GM12878 (cell line): ENCODE measurements at regions of chr2 and their contacts with region 1.

Region 1: GRCh38 chr2:118088051-118089024 is at the start of gene INSIG2:
- DNase-seq: peak; percentile 98
- ATAC-seq: peak; percentile 95
- H3K4me3 ChIP-seq: peak within 1 kb of the TSS; percentile 70
- H3K27ac ChIP-seq: peak within 1 kb of the TSS; percentile 69
- H3K4me1 ChIP-seq: no peaks in the 10 kb centered on the region
- H3K27me3 ChIP-seq: 0 out of 4 replicates have a peak, but pooled peaks cover 0 to 3% of the 10 kb centered on the region in 2 experiments
- CTCF ChIP-seq: peak in 1 of 3 experiments; percentile 21; a peak in 1 of 6 replicates
- EP300 ChIP-seq: 0 out of 4 replicates have a peak, but pooled peaks of 1 of the 2 experiments have one; percentile 17
- POLR2A ChIP-seq: peak; percentile 74
- RAD21 ChIP-seq: no peak
- polyA plus RNA-seq, gene INSIG2: 14.2 to 15.6 TPM

Region 2: GRCh38 chr2:117692001-117692763 is 396.2 kb before region 1 on chr2:
- CTCF ChIA-PET with region 1: no interaction called
- POLR2A ChIA-PET with region 1: no interaction called
- RAD21 ChIA-PET with region 1: no interaction called
- SMC1A ChIA-PET with region 1: no interaction called
- in situ Hi-C with region 1: no loop called
- intact Hi-C with region 1: no loop called
- DNase-seq: no peak
- ATAC-seq: no peak
- H3K4me3 ChIP-seq: no peak overlapping the region
- H3K27ac ChIP-seq: no peak overlapping the region
- H3K4me1 ChIP-seq: no peaks in the 10 kb centered on the region
- H3K27me3 ChIP-seq: no peaks in the 10 kb centered on the region
- CTCF ChIP-seq: no peak
- EP300 ChIP-seq: no peak
- POLR2A ChIP-seq: no peak
- RAD21 ChIP-seq: no peak

Region 3: GRCh38 chr2:117979911-117980701 is 108.2 kb before region 1 on chr2:
- CTCF ChIA-PET with region 1: no interaction called
- POLR2A ChIA-PET with region 1: no interaction called
- RAD21 ChIA-PET with region 1: no interaction called
- SMC1A ChIA-PET with region 1: no interaction called
- in situ Hi-C with region 1: no loop called
- intact Hi-C with region 1: no loop called
- DNase-seq: no peak
- ATAC-seq: no peak
- H3K4me3 ChIP-seq: no peak overlapping the region
- H3K27ac ChIP-seq: no peak overlapping the region
- H3K4me1 ChIP-seq: no peaks in the 10 kb centered on the region
- H3K27me3 ChIP-seq: no peaks in the 10 kb centered on the region
- CTCF ChIP-seq: no peak
- EP300 ChIP-seq: no peak
- POLR2A ChIP-seq: no peak
- RAD21 ChIP-seq: no peak

Region 4: DNA sequence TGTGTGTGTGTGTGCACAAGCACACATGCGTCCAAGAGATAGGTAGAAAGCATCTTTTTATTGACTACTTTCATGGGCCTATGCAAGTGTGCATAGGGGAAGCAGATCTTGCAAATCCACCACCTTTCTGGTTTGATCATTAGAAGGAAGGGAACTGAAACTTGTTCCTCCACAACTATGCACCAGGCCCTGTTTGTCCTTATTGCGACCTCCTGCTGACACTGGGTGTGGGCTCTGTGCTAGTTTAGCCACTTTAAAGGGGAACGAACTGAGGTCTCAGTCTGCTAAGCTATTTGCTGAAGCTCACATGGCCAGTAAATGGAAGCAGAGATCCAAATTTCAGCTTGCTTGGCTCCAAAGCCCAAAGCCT is 32.2 kb before region 1 on chr2:
- CTCF ChIA-PET with region 1: interaction called, 31 read pairs
- POLR2A ChIA-PET with region 1: interaction called, 6 read pairs
- RAD21 ChIA-PET with region 1: interaction called, 4 read pairs
- SMC1A ChIA-PET with region 1: interaction called, 48 read pairs
- in situ Hi-C with region 1: no loop called
- intact Hi-C with region 1: no loop called
- DNase-seq: peak; percentile 86
- ATAC-seq: peak; percentile 92
- H3K4me3 ChIP-seq: peak overlapping the region; percentile 56
- H3K27ac ChIP-seq: peak overlapping the region; percentile 73
- H3K4me1 ChIP-seq: peaks cover 39% of the 10 kb centered on the region
- H3K27me3 ChIP-seq: no peaks in the 10 kb centered on the region
- CTCF ChIP-seq: no peak
- EP300 ChIP-seq: peak; percentile 72 to 90
- POLR2A ChIP-seq: no peak
- RAD21 ChIP-seq: no peak

Region 5: DNA sequence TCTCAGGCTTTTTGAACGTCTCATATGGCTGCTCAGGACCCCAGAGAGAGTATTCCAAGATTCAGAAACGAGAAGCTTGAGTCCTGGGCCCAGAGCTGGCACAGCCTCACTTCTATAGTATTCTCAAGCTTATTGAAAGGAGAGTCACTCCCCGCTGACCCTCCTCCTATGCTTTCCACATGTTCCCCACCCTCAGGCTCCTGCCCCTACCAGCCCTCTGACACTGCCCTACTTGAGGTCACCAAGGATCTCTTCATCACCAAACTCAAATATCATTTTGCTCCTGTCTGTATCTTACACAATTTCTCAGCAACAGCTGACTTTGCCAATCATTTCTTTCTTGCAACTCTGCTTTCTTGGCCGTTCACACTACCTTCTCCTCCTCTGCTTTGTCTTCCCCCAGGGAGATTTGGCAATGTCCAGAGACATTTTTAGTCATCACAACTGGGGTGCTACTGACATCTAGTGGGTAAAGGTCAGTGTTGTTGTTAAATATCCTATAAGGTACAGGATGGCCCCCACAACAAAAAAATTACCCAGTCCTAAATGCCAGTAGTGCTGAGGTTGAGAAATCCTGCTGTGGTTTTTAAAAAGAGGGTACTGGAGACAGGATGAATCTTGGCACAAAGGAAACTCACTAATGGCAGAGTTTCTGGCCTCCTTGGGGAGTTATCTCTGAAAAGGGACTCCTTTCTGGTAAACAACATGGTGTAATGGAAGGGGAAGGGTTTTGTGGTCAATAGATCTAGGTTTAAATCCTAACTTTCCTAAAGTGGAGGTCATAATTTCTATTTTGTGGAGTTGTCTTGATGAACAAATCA is 27.0 kb before region 1 on chr2:
- CTCF ChIA-PET with region 1: interaction called, 31 read pairs
- POLR2A ChIA-PET with region 1: interaction called, 6 read pairs
- RAD21 ChIA-PET with region 1: interaction called, 4 read pairs
- SMC1A ChIA-PET with region 1: interaction called, 48 read pairs
- in situ Hi-C with region 1: no loop called
- intact Hi-C with region 1: no loop called
- DNase-seq: peak; percentile 57
- ATAC-seq: peak; percentile 87
- H3K4me3 ChIP-seq: no peak overlapping the region
- H3K27ac ChIP-seq: no peak overlapping the region
- H3K4me1 ChIP-seq: peaks cover 27% of the 10 kb centered on the region
- H3K27me3 ChIP-seq: no peaks in the 10 kb centered on the region
- CTCF ChIP-seq: peak; percentile 67 to 76 (median 68)
- EP300 ChIP-seq: no peak
- POLR2A ChIP-seq: no peak
- RAD21 ChIP-seq: peak; percentile 98

Region 6: GRCh38 chr2:118077636-118078247 is 10.6 kb before region 1 on chr2:
- CTCF ChIA-PET with region 1: interaction called, 4 read pairs
- POLR2A ChIA-PET with region 1: interaction called, 3 read pairs
- RAD21 ChIA-PET with region 1: interaction called, 3 read pairs
- SMC1A ChIA-PET with region 1: interaction called, 11 read pairs
- in situ Hi-C with region 1: no loop called
- intact Hi-C with region 1: no loop called
- DNase-seq: no peak
- ATAC-seq: no peak
- H3K4me3 ChIP-seq: no peak overlapping the region
- H3K27ac ChIP-seq: no peak overlapping the region
- H3K4me1 ChIP-seq: no peaks in the 10 kb centered on the region
- H3K27me3 ChIP-seq: peaks cover 0 to 15% of the 10 kb centered on the region in 2 experiments; a peak in 2 of 4 replicates
- CTCF ChIP-seq: no peak
- EP300 ChIP-seq: no peak
- POLR2A ChIP-seq: no peak
- RAD21 ChIP-seq: no peak

Region 7: DNA sequence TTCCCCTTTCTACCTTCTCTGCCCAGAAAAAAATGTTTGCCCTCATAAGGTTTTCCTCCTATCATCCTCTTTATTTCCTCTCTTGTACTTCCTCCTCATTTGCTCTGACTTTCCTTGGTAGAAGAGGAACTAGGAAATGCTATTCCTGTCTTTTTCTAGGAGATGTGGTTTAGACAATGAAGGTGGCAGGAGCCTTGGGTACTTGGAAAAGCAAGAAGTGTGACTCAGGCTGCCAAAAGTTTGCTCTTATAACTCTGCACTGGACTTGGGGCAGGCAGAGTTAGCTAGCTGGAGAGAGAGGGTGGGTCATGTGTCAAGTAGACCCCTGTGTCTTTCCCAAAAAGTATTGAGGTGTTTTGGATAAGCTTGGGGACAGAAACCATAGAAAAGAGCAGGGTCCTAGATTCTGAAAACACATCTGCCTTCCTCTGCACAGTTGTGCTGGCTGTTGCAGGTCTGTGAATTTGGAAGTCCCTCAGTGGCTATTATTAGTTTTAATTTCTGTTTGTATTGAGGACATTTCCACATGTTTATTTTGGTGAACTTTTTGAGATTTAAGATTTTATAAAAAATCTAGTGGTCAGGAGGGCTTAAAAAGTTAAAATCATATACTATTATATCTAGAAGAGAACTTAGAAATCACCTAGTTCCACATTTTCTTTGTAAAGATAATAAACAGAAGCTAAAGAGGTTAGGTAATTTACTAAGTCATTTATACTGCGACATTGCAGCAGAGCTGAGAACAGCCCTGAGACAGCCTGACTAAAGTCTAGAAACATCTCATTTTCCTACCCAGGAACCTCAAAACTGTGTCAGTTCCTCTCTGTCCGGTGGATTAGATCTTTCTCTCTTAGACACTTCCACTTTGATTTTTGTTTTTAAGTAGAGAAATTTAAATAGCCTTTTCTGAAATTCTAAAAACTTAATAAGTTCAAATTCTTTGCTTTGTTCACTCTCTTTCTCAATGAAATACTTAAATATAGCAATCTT is 15.9 kb after region 1 on chr2:
- CTCF ChIA-PET with region 1: interaction called, 10 read pairs
- POLR2A ChIA-PET with region 1: interaction called, 24 read pairs
- RAD21 ChIA-PET with region 1: interaction called, 10 read pairs
- SMC1A ChIA-PET with region 1: interaction called, 19 read pairs
- in situ Hi-C with region 1: no loop called
- intact Hi-C with region 1: loop called (anchors 2 kb)
- DNase-seq: peak; percentile 53
- ATAC-seq: peak; percentile 99
- H3K4me3 ChIP-seq: peak overlapping the region; percentile 45; the same call in 1 of the 2 replicates
- H3K27ac ChIP-seq: peak overlapping the region; percentile 52
- H3K4me1 ChIP-seq: peaks cover 20% of the 10 kb centered on the region
- H3K27me3 ChIP-seq: no peaks in the 10 kb centered on the region
- CTCF ChIP-seq: no peak
- EP300 ChIP-seq: peak in 1 of 2 experiments; percentile 85; a peak in 2 of 4 replicates
- POLR2A ChIP-seq: no peak
- RAD21 ChIP-seq: no peak

Region 8: DNA sequence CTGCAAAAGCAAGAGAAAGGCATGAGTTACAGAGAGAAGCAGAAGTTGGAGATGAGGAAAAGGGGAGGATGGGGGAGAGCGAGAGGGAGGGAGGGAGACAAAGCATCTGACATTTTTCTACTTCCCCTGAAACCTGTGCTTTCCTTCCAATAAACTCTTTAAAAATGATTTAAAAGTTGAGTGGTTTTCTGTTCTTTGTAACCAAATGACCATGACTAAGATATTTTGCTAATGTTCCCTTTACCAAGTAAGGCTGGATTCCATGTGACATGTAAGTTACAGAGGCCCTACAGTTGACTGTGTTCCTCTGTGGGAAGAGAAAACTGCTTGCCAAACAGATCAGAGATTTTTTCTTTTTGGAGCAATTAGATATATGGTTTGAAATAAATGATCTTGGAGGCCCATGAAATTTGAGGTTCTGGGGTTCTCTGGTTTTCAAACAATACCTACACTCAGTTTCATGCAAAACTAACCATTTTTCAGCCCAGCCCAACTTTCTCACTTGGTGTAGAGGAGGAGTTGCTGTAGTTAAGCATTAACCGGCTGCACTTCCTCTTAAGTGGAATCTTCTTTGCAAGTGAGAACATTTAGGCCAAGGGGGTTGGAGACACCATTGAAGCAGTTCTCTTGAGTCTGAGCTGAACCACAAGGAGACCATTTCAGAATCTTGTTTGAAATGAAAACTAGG is 34.4 kb after region 1 on chr2:
- CTCF ChIA-PET with region 1: interaction called, 4 read pairs
- POLR2A ChIA-PET with region 1: no interaction called
- RAD21 ChIA-PET with region 1: interaction called, 11 read pairs
- SMC1A ChIA-PET with region 1: interaction called, 10 read pairs
- in situ Hi-C with region 1: no loop called
- intact Hi-C with region 1: loop called (anchors 1 kb)
- DNase-seq: peak; percentile 43
- ATAC-seq: peak; percentile 94
- H3K4me3 ChIP-seq: no peak overlapping the region
- H3K27ac ChIP-seq: no peak overlapping the region
- H3K4me1 ChIP-seq: no peaks in the 10 kb centered on the region
- H3K27me3 ChIP-seq: no peaks in the 10 kb centered on the region
- CTCF ChIP-seq: no peak
- EP300 ChIP-seq: 0 out of 4 replicates have a peak, but pooled peaks of 1 of the 2 experiments have one; percentile 32
- POLR2A ChIP-seq: no peak
- RAD21 ChIP-seq: no peak

Region 9: GRCh38 chr2:118186110-118186857 is 97.9 kb after region 1 on chr2:
- CTCF ChIA-PET with region 1: no interaction called
- POLR2A ChIA-PET with region 1: interaction called, 7 read pairs
- RAD21 ChIA-PET with region 1: interaction called, 9 read pairs
- SMC1A ChIA-PET with region 1: interaction called, 5 read pairs
- in situ Hi-C with region 1: no loop called
- intact Hi-C with region 1: loop called (anchors 5 kb)
- DNase-seq: peak; percentile 44
- ATAC-seq: peak; percentile 96
- H3K4me3 ChIP-seq: peak overlapping the region; percentile 75
- H3K27ac ChIP-seq: peak overlapping the region; percentile 39; the same call in 1 of the 2 replicates
- H3K4me1 ChIP-seq: peaks cover 3% of the 10 kb centered on the region
- H3K27me3 ChIP-seq: no peaks in the 10 kb centered on the region; a peak in 3 of 4 replicates
- CTCF ChIP-seq: no peak; a peak in 1 of 6 replicates
- EP300 ChIP-seq: no peak
- POLR2A ChIP-seq: peak; percentile 86
- RAD21 ChIP-seq: no peak

Region 10: DNA sequence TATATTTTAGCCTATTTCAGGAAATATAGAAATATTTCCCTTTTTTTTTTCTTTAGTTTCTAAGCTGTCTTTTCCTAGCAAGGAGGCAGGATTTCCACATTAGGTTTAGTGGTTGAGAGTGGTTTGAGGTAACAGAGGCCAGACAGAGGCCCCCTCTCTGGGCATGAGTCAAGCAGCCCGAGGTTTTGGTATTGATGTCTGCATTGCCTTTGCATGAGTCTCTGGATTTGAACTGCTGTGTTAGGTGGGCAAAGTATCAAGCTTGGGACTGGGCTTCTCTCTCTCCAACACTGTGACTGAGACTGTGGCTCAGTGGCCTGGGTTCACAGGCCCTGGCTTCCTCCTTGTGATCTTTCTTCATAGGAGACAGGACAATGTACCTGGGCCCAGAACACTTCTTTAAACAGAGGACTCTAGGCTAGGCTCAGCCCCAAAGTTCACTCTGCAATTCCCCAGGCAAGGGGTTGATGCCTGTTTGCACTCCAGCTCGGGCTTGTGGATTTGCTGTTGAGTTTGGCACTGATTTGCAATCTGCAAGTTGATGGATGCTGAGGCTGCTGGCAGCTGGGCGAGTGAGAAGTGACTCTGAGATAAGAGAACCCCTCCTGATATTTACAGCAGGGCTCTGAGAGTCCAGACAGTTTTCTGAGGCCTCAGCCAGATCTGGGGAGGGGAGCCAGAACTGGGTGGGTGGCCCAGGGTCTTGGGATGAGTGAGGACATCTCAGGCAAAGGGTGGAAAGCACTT is 487.9 kb after region 1 on chr2:
- CTCF ChIA-PET with region 1: no interaction called
- POLR2A ChIA-PET with region 1: no interaction called
- RAD21 ChIA-PET with region 1: no interaction called
- SMC1A ChIA-PET with region 1: no interaction called
- in situ Hi-C with region 1: no loop called
- intact Hi-C with region 1: no loop called
- DNase-seq: no peak
- ATAC-seq: no peak
- H3K4me3 ChIP-seq: no peak overlapping the region
- H3K27ac ChIP-seq: no peak overlapping the region
- H3K4me1 ChIP-seq: no peaks in the 10 kb centered on the region
- H3K27me3 ChIP-seq: no peaks in the 10 kb centered on the region; a peak in 1 of 4 replicates
- CTCF ChIP-seq: no peak
- EP300 ChIP-seq: no peak
- POLR2A ChIP-seq: no peak
- RAD21 ChIP-seq: no peak